HCT116 (cell line): ENCODE measurements at regions of chr7 and their contacts with region 1.

Region 1: GRCh38 chr7:64951250-64951848 is 39.5 kb downstream of the ZNF117 start:
- DNase-seq: peak; percentile 16
- ATAC-seq: peak; percentile 62
- H3K4me3 ChIP-seq: no peak overlapping the region
- H3K27ac ChIP-seq: no peak overlapping the region
- H3K4me1 ChIP-seq: no peaks in the 10 kb centered on the region
- H3K27me3 ChIP-seq: no peaks in the 10 kb centered on the region
- CTCF ChIP-seq: peak; percentile 49 to 79 (median 73); a peak in 5 of 6 replicates
- POLR2A ChIP-seq: no peak
- RAD21 ChIP-seq: peak; percentile 82

Region 2: DNA sequence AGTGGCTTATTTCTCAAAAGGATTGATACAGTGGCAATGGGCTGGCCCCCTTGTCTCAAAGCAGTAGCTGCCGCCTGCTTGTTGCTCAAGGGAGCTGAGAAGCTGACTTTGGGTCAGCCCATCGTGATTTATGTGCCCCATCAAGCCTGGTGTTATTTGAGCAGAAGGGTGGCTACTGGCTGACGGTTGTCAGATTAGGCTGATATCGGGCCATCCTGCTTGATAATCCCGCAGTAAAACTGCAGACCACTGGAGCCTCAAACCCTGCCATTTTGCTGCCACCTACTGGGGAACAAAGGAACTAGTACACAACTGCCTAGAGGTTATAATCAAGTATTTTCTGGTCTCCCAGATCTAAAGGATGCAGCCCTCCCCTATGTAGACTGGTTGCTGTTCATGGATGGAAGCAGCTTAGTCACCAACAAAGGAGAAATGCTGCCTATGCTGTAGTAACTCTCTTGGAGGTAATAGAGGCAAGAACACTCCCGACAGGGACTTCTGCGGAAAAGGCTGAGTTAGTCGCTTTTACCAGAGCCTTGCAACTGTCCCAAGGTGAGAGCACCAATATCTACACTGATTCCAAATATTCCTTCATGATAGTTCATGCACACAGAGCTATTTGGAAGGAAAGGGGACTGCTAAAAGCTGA is 356.4 kb after region 1 on chr7:
- CTCF ChIA-PET with region 1: interaction called, 11 read pairs
- POLR2A ChIA-PET with region 1: no interaction called
- RAD21 ChIA-PET with region 1: no interaction called
- intact Hi-C with region 1: loop called (anchors 1 kb)
- DNase-seq: peak; percentile 34
- ATAC-seq: peak; percentile 94
- H3K4me3 ChIP-seq: no peak overlapping the region
- H3K27ac ChIP-seq: no peak overlapping the region
- H3K4me1 ChIP-seq: no peaks in the 10 kb centered on the region
- H3K27me3 ChIP-seq: no peaks in the 10 kb centered on the region
- CTCF ChIP-seq: peak; percentile 72 to 87 (median 86); a peak in 5 of 6 replicates
- POLR2A ChIP-seq: no peak
- RAD21 ChIP-seq: peak; percentile 89